Activated B cell treated with CpG ODN at 0.5 μM for 24 hours (primary cell): ENCODE measurements at regions of chr1 and their contacts with region 1.

Region 1: DNA sequence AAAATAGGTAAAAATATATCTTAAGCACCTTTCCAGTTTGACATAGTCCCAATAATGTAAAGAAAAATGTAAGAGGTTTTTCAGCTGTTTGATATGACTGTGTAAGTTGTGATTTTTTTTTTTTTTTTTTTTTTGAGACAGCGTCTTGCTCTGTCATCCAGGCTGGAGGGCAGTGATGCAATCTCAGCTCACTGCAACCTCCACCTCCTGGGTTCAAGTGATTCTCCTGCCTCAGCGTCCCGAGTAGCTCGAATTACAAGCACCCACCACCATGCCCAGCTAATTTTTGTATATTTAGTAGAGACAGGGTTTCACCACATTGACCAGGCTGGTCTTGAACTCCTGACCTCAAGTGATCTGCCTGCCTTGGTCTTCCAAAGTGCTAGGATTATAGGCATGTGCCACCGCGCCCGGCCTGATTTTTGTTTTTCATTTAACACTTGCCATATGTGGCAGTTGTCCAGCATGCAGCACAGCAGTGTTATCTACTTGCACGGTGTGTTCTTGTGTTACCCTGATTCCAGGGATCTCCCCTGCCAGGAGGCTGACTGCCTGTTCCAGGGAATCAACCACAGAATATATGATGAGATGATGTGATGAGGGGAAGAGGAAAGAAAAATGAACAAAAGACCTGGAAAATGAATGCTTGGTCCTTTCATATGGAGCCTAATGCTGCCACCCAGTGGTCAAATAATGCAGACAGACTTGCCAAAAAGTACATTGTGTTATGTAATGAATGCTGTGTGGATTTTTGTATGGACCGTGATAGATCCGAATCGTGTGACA is 79.0 kb downstream of the RAVER2 start:
- DNase-seq: no peak
- ATAC-seq: peak; percentile 54
- H3K4me3 Mint-ChIP-seq: no peak overlapping the region
- H3K27ac Mint-ChIP-seq: no peak overlapping the region
- H3K4me1 Mint-ChIP-seq: peaks cover 22% of the 10 kb centered on the region
- H3K27me3 Mint-ChIP-seq: no peaks in the 10 kb centered on the region
- CTCF ChIP-seq: no peak

Region 2: GRCh38 chr1:64251971-64252370 is 571.9 kb before region 1 on chr1:
- CTCF ChIA-PET with region 1: no interaction called
- POLR2A ChIA-PET with region 1: no interaction called
- intact Hi-C with region 1: loop called (anchors 5 kb)
- DNase-seq: no peak
- ATAC-seq: no peak
- H3K4me3 Mint-ChIP-seq: no peak overlapping the region
- H3K27ac Mint-ChIP-seq: no peak overlapping the region
- H3K4me1 Mint-ChIP-seq: no peaks in the 10 kb centered on the region
- H3K27me3 Mint-ChIP-seq: peaks cover 26% of the 10 kb centered on the region
- CTCF ChIP-seq: no peak

Region 3: DNA sequence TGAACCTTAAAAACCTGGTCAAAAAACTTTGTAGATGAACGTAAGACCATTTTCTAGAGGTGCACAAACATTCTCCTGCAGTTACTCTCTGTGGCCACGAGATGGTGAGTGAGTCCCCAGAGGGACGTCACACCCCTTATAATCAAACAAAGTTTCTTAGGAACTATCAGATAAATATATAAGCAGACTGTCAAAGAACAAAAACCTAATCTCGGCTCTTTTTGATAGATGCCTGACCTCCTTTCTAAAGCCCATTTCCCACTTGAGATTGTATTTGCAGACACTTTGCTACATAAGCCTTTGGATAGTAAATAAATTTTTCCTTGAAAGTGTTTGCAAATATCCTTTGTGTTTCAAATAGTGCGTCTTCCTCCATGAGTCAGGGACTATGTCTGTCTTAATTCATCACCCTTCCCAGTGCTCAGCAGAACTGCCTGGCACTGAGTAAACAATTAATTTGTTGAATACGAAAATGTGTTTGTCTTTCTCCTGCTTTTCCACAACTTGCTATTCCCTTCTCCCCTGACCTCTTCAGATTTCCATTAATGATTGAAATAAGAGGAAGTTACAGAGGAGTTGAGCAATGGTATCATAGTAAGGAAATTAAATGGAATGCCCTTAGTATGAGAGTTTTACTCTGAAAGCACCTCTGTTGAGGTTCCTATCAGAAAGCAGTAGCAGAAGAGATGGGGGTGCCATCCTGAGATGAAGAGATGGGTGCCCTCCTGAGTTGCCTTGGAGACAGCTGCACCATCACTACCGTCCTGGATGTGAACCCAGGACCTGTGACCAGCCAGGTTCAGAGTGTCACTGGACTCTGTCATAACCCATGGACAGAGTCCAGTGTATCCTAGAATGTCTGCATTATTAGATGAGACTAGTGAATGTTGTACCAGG is 136.8 kb before region 1 on chr1:
- CTCF ChIA-PET with region 1: interaction called, 9 read pairs
- POLR2A ChIA-PET with region 1: no interaction called
- intact Hi-C with region 1: loop called (anchors 1 kb)
- DNase-seq: no peak
- ATAC-seq: peak; percentile 64
- H3K4me3 Mint-ChIP-seq: no peak overlapping the region
- H3K27ac Mint-ChIP-seq: no peak overlapping the region
- H3K4me1 Mint-ChIP-seq: no peaks in the 10 kb centered on the region
- H3K27me3 Mint-ChIP-seq: no peaks in the 10 kb centered on the region
- CTCF ChIP-seq: peak; percentile 67

Region 4: DNA sequence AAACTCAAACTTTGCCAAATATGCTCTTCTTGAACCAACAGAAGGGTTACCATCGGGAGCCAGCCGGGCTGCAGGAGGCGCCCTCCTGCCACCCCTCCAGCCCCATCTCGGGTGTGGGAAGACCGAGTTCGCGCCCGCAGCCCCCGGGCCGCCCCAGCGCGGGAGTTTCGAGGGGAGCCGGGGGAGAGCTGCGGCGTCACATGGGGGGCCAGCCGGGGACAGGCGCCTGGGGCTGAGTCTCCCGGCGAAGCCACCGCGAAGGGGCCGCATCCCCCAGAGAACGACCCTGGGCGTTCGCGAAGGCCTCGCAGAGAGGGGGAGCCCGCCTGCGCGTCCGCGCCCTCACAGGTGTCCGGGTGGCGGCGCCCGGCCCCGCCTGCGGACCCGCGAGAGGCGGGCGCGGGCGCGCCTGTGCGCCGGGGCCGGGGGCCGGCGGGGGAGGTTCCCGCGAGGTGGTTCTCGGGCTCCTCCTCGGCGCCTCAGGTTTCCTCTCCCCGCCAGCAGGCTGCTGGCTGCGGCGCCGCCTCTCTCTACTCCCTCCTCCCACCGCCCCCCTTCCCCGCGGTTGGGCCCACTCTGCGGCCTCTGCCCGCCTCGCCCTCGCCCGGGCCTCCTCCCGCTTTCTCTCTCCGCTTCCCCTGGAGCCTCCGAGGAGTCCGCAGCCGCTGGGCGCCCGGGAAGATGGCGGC is 79.2 kb before region 1 on chr1 and contains the start of gene RAVER2:
- CTCF ChIA-PET with region 1: no interaction called
- POLR2A ChIA-PET with region 1: no interaction called
- intact Hi-C with region 1: loop called (anchors 1 kb)
- DNase-seq: peak; percentile 50
- ATAC-seq: peak; percentile 79
- H3K4me3 Mint-ChIP-seq: peak within 1 kb of the TSS; percentile 85
- H3K27ac Mint-ChIP-seq: peak within 1 kb of the TSS; percentile 18
- H3K4me1 Mint-ChIP-seq: peaks cover 20% of the 10 kb centered on the region
- H3K27me3 Mint-ChIP-seq: peaks cover 8% of the 10 kb centered on the region
- CTCF ChIP-seq: no peak
- total RNA-seq, gene RAVER2: 1.0 and 1.2 TPM in 2 replicates

Region 5: GRCh38 chr1:64775113-64775512 is 48.8 kb before region 1 on chr1:
- CTCF ChIA-PET with region 1: no interaction called
- POLR2A ChIA-PET with region 1: no interaction called
- intact Hi-C with region 1: no loop called
- DNase-seq: no peak
- ATAC-seq: no peak
- H3K4me3 Mint-ChIP-seq: no peak overlapping the region
- H3K27ac Mint-ChIP-seq: peak overlapping the region; percentile 1
- H3K4me1 Mint-ChIP-seq: peaks cover 10% of the 10 kb centered on the region
- H3K27me3 Mint-ChIP-seq: no peaks in the 10 kb centered on the region
- CTCF ChIP-seq: no peak

Region 6: DNA sequence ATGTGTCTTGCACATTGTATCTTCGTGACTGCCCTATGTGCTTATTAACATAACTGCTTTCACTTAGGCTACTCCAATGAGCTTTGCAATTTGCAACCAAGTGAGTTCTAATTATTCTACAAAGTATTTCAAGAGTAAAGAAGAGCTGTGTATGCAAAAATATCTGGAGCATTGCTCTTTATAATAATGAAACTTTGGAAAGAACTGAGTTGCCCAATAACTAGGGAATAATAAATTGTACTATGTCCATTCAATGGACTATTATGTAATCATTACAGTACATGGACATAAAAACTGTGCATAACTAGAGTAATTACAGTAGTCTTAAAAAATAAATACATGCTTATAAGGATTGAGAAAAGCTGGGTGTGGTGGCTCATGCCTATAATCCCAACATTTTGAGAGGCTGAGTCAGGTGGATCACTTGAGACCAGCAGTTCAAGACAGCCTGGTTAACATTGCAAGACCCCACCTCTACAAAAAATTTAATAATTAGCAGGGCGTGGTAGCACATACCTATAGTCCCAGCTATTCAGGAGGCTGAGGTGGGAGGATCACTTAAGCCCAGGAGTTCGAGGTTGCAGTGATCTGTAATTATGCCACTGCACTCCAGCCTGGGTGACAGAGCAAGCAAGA is 212.8 kb after region 1 on chr1:
- CTCF ChIA-PET with region 1: interaction called, 5 read pairs
- POLR2A ChIA-PET with region 1: no interaction called
- intact Hi-C with region 1: loop called (anchors 2 kb)
- DNase-seq: no peak
- ATAC-seq: no peak
- H3K4me3 Mint-ChIP-seq: no peak overlapping the region
- H3K27ac Mint-ChIP-seq: no peak overlapping the region
- H3K4me1 Mint-ChIP-seq: peaks cover 11% of the 10 kb centered on the region
- H3K27me3 Mint-ChIP-seq: no peaks in the 10 kb centered on the region
- CTCF ChIP-seq: no peak

Region 7: DNA sequence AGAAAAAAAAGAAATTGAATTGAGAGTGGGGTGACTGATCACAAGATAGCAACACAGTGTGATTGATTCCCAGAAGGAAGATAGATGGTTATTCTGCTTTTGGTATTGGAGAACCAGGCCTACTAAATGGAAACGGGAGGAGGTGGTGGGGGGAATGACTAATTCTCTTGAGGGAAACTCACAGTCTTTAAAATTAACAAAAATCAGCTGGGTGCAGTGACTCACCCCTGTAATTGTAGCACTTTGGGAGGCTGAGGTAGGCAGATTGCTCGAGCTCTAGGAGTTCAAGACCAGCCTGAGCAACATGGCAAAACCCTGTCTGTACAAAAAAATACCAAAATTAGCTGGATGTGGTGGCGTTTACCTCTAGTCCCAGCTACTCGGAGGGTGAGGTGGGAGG is 834.2 kb after region 1 on chr1:
- CTCF ChIA-PET with region 1: no interaction called
- POLR2A ChIA-PET with region 1: no interaction called
- intact Hi-C with region 1: no loop called
- DNase-seq: no peak
- ATAC-seq: no peak
- H3K4me3 Mint-ChIP-seq: no peak overlapping the region
- H3K27ac Mint-ChIP-seq: no peak overlapping the region
- H3K4me1 Mint-ChIP-seq: no peaks in the 10 kb centered on the region
- H3K27me3 Mint-ChIP-seq: peaks cover 4% of the 10 kb centered on the region
- CTCF ChIP-seq: no peak